ENCODE measurements at regions of chr12 and their contacts with region 1.

Region 1: GRCh38 chr12:42129595-42130204 is 15.0 kb downstream of the GXYLT1 start:
- DNase-seq: no peak
- ATAC-seq: peak; percentile 80 to 93 (median 84)
- H3K4me3 ChIP-seq: no peak overlapping the region
- H3K27ac ChIP-seq: peak overlapping the region; percentile 58
- H3K4me1 ChIP-seq: peaks cover 24% of the 10 kb centered on the region
- H3K27me3 ChIP-seq: no peaks in the 10 kb centered on the region
- CTCF ChIP-seq: peak; percentile 91

Region 2: DNA sequence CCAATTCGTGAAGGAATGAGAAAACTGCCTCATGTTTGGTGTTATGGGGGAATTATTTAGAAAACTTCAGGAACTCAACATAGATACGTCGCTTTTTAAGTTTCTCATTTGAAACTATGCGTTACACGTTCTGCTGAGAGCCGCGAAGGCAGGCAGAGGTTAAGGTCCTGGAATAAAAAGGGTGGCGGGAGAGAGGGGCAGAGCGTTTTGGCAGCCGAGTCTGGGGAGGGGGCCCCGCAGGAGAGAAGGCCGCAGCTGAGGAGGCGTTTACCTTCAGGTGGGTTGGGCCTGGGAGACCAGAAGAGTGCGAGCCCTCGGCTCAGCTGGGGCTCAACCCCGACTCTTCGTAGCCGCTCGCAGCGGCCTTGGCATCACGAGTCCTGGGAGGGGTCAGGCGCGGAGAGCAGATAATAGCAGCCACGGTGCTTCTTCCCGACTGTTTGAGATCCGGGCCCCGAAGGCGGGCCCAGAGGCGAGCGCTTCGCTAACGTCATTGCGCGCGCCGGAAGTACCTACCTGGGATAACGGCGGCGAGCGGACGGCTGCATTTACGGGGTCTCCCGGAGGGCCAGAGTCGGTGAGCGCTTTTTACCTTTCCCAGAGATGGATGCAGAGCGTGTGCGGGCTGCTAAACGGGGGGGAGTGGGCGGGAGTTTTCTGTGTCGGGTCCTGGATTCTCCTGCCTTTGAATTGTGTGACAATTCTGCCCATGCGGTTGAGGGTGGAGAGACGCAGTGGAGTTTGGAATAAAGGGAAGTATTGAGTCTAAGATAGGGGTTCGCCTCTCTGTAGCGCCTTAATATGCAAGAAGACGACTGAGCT is 196.2 kb after region 1 on chr12 and contains the starts of genes PPHLN1 and ZCRB1:
- intact Hi-C with region 1: loop called in 1 of 2 experiments (anchors 5 kb)
- DNase-seq: peak; percentile 84 to 91
- ATAC-seq: peak; percentile 93 to 98 (median 96)
- H3K4me3 ChIP-seq: peak within 1 kb of the TSS; percentile 84
- H3K27ac ChIP-seq: peak within 1 kb of the TSS; percentile 85
- H3K4me1 ChIP-seq: peaks cover 11% of the 10 kb centered on the region
- H3K27me3 ChIP-seq: no peaks in the 10 kb centered on the region
- CTCF ChIP-seq: no peak
- total RNA-seq, gene PPHLN1: 27.0 to 43.8 (median 30.2) TPM
- total RNA-seq, gene ZCRB1: 52.5 to 66.4 (median 57.5) TPM

Region 3: GRCh38 chr12:42332301-42333285 is 202.9 kb after region 1 on chr12:
- intact Hi-C with region 1: loop called (anchors 2 to 5 kb)
- DNase-seq: no peak
- ATAC-seq: peak in 2 of 4 donors; percentile 51 to 83
- H3K4me3 ChIP-seq: no peak overlapping the region
- H3K27ac ChIP-seq: no peak overlapping the region
- H3K4me1 ChIP-seq: peaks cover 6% of the 10 kb centered on the region
- H3K27me3 ChIP-seq: no peaks in the 10 kb centered on the region
- CTCF ChIP-seq: peak; percentile 80

Region 4: DNA sequence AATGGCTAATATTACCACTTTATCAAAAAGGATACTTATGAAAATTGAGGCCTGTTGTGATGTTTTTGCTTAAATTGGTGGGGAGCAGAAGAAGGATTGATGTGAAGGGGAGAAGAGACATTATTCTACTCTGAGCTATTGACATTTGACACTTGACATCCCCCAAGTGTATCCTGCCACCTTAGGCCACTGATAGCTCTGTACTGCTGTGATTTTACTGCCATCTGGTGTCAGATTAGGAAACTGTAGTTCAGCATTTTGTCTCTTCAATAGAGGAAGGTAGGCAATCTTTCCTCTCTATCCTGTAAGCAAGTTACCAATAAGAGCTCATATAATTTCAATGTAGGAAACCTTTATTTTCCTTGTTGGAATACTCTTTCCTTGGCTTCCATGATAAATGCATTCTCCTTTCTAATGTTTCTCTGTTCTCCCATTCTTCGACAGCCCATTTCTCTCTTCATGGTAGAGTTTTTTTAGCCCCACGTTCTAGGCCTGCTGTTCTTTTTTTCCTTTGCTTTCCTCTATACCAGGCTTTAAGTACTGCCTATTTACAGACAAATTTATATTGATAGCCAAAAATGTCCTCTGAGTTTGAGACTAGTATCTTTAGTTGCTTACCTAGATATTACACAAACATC is 242.6 kb after region 1 on chr12:
- intact Hi-C with region 1: loop called in 1 of 2 experiments (anchors 10 kb)
- DNase-seq: no peak
- ATAC-seq: peak; percentile 46 to 78 (median 60)
- H3K4me3 ChIP-seq: no peak overlapping the region
- H3K27ac ChIP-seq: no peak overlapping the region
- H3K4me1 ChIP-seq: no peaks in the 10 kb centered on the region
- H3K27me3 ChIP-seq: no peaks in the 10 kb centered on the region
- CTCF ChIP-seq: peak; percentile 65

Measured in psoas muscle (tissue), 8 donors.